ENCODE measurements at regions of chr6 and their contacts with region 1.

Region 1: DNA sequence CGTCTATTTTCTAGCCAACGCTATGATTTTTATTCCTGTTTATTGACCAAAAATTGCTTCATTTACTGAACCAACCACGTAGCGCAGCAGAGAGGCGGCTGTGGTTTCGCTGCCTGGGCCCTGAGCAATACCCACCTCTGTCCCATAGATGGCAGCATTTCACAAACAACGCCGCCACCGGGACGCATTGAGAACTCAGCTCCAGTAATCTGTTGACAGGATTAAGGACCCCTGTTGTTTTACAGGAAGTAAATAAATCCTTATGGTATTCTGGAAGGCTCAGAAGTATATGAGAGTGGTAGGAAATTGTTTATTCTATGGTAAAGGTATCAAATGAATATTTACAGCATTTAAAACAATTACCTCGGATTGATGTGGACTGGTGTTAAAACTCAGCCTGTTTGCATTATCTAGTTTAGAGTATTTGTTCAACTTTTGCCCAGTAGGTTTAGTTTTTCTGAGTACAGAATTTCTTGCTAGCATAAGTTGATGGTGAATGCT is 547.9 kb upstream of the SLC35B3 start:
- DNase-seq: peak; percentile 67
- H3K4me3 ChIP-seq: peak overlapping the region in 1 of 2 experiments; percentile 16; a peak in 1 of 4 replicates
- H3K27ac ChIP-seq: no peak overlapping the region
- H3K4me1 ChIP-seq: no peaks in the 10 kb centered on the region; a peak in 1 of 4 replicates
- H3K27me3 ChIP-seq: no peaks in the 10 kb centered on the region
- CTCF ChIP-seq: peak; percentile 98
- EP300 ChIP-seq: no peak
- RAD21 ChIP-seq: peak; percentile 84

Region 2: GRCh38 chr6:8131256-8131897 is 851.9 kb before region 1 on chr6:
- CTCF ChIA-PET with region 1: interaction called, 10 read pairs
- POLR2A ChIA-PET with region 1: no interaction called
- DNase-seq: peak; percentile 58
- H3K4me3 ChIP-seq: peak overlapping the region in 1 of 2 experiments; percentile 39; a peak in 1 of 4 replicates
- H3K27ac ChIP-seq: no peak overlapping the region
- H3K4me1 ChIP-seq: no peaks in the 10 kb centered on the region; a peak in 1 of 4 replicates
- H3K27me3 ChIP-seq: no peaks in the 10 kb centered on the region; the same call in 1 of the 2 replicates
- CTCF ChIP-seq: peak; percentile 75
- EP300 ChIP-seq: no peak
- RAD21 ChIP-seq: peak; percentile 92

Region 3: GRCh38 chr6:8243475-8243874 is 739.8 kb before region 1 on chr6:
- CTCF ChIA-PET with region 1: no interaction called
- POLR2A ChIA-PET with region 1: no interaction called
- DNase-seq: no peak
- H3K4me3 ChIP-seq: no peak overlapping the region
- H3K27ac ChIP-seq: no peak overlapping the region
- H3K4me1 ChIP-seq: peaks cover 0 to 12% of the 10 kb centered on the region in 2 experiments; a peak in 3 of 4 replicates
- H3K27me3 ChIP-seq: no peaks in the 10 kb centered on the region
- CTCF ChIP-seq: no peak
- EP300 ChIP-seq: no peak
- RAD21 ChIP-seq: no peak

Region 4: GRCh38 chr6:8642131-8642530 is 341.1 kb before region 1 on chr6:
- CTCF ChIA-PET with region 1: no interaction called
- POLR2A ChIA-PET with region 1: no interaction called
- DNase-seq: no peak
- H3K4me3 ChIP-seq: no peak overlapping the region
- H3K27ac ChIP-seq: no peak overlapping the region
- H3K4me1 ChIP-seq: no peaks in the 10 kb centered on the region
- H3K27me3 ChIP-seq: no peaks in the 10 kb centered on the region
- CTCF ChIP-seq: no peak
- EP300 ChIP-seq: no peak
- RAD21 ChIP-seq: no peak

Region 5: GRCh38 chr6:8969747-8970146 is 13.5 kb before region 1 on chr6:
- CTCF ChIA-PET with region 1: interaction called, 34 read pairs
- POLR2A ChIA-PET with region 1: no interaction called
- DNase-seq: no peak
- H3K4me3 ChIP-seq: no peak overlapping the region
- H3K27ac ChIP-seq: no peak overlapping the region
- H3K4me1 ChIP-seq: no peaks in the 10 kb centered on the region; a peak in 1 of 4 replicates
- H3K27me3 ChIP-seq: no peaks in the 10 kb centered on the region
- CTCF ChIP-seq: no peak
- EP300 ChIP-seq: no peak
- RAD21 ChIP-seq: no peak

Region 6: DNA sequence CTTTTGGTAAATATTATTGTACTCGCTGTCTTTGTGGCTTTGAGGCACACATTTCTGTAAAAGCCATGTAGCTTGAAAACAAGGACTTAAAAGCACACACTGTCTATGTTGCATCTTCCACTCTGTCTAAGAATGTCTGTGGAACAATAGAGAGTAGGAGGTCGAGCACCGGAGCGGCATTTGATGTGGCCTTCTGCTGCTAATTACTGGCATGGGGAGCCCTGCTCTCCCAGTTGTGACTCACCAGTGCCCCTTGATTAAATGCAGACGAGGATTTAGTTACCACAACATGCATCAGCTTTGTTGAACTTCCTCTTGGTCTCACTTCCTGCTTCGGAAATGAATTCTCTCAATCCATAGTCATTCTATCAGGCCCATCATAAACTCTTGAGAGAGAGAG is 132.8 kb after region 1 on chr6:
- CTCF ChIA-PET with region 1: no interaction called
- POLR2A ChIA-PET with region 1: no interaction called
- DNase-seq: no peak
- H3K4me3 ChIP-seq: no peak overlapping the region
- H3K27ac ChIP-seq: peak overlapping the region in 1 of 2 experiments; percentile 32; a peak in 2 of 4 replicates
- H3K4me1 ChIP-seq: no peaks in the 10 kb centered on the region
- H3K27me3 ChIP-seq: no peaks in the 10 kb centered on the region
- CTCF ChIP-seq: no peak
- EP300 ChIP-seq: no peak
- RAD21 ChIP-seq: no peak

Region 7: DNA sequence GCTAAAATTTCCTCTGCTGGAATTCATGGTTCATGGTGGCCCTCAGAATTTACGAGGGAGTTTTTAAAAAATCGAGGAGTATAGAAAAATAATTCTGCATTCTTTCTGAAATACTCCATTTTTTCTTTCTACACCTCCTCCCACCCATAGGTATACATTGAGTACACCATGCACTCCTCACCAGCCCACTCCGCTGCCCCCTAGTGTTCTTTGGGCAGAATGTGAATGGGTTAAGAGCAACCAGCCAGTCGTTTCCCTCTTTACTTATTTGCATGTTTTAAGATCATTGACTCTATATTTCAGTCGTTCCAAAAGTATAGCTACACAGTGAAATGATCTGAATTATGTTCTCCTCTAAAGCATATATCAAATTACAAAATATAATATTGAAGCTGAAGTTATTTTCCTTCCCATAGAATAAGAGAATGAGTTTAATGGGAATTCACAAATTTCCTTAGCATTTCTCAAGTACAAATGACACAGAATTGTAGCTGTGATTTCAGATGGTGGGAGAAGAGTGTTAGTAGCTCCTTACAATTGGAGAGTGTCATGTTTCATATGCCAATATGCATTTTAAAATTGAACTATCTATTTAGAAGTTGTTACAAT is 429.8 kb after region 1 on chr6:
- CTCF ChIA-PET with region 1: interaction called, 12 read pairs
- POLR2A ChIA-PET with region 1: no interaction called
- DNase-seq: peak; percentile 35
- H3K4me3 ChIP-seq: no peak overlapping the region
- H3K27ac ChIP-seq: no peak overlapping the region
- H3K4me1 ChIP-seq: no peaks in the 10 kb centered on the region
- H3K27me3 ChIP-seq: no peaks in the 10 kb centered on the region
- CTCF ChIP-seq: peak; percentile 57
- EP300 ChIP-seq: no peak
- RAD21 ChIP-seq: peak; percentile 60

Region 8: GRCh38 chr6:10434692-10435376 is 1451.6 kb after region 1 on chr6:
- CTCF ChIA-PET with region 1: interaction called, 15 read pairs
- POLR2A ChIA-PET with region 1: no interaction called
- DNase-seq: peak; percentile 24
- H3K4me3 ChIP-seq: peak overlapping the region in 1 of 2 experiments; percentile 45; a peak in 2 of 4 replicates
- H3K27ac ChIP-seq: no peak overlapping the region
- H3K4me1 ChIP-seq: no peaks in the 10 kb centered on the region
- H3K27me3 ChIP-seq: no peaks in the 10 kb centered on the region; the same call in 1 of the 2 replicates
- CTCF ChIP-seq: peak; percentile 83
- EP300 ChIP-seq: no peak
- RAD21 ChIP-seq: peak; percentile 73

Measured in SK-N-SH (cell line).